OCI-LY7 (cell line): ENCODE measurements at regions of chr15 and their contacts with region 1.

Region 1: DNA sequence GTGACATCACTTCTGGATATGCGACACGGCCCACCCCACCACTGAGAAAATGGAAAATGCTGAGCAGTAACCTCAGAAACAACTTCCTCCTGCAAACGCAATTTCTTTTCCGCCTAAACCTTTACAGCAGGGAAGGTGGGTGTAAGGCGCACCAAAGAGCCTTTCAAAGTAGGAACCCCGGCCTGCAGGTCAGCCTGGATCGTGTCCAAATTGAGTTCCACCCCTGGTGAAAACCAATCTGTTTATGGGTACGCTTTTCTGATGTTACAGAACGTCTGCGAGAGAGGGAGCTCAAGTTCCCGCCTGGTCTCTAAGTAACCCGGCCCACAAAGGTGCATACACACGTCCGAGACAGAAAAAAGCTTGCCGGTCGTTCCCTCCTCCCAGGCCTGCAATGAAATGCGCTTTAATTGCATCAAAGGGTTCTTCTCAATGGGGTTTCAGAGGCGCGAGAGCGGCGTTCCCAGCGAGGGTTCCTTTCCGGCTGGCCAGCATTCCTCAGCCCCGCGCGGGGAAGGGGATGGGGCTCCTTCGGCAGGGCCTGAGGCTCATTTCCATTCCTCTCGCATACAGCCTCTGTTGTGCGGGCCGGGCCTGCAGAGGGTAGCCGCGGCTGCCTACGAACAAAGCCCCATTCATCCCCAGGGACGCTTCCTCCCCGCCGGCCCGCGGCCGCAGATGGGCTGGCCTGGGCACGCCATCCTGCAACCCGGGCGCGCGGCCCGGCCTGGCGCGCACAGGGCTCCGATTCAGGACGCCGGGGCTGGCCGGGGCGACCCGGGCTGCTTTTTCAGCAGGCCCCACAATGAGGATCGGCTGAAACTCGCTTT is 138.1 kb downstream of the TMCO5A start:
- DNase-seq: peak; percentile 92
- H3K4me3 ChIP-seq: peak overlapping the region; percentile 70
- H3K27ac ChIP-seq: peak overlapping the region; percentile 97
- H3K4me1 ChIP-seq: peaks cover 86% of the 10 kb centered on the region
- CTCF ChIP-seq: peak; percentile 71

Region 2: DNA sequence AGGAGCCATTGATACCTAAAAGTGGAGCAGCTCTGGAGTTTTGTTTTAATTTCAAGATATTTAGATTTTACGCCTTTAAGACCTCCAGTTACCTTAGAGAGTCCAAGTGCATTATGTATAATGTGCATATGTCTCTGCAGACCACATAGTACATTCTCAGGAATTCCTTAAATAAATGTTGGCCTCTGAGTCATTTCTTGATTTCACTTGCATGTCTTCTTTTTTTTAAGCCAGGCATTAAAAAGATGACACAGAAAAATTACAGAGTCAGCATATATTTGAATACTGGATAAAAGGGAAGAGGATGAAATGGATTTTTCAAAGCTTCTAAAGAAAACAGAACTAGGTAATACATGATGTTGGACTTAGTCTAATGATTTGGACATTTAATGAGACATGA is 12.9 kb before region 1 on chr15:
- CTCF ChIA-PET with region 1: interaction called, 5 read pairs
- POLR2A ChIA-PET with region 1: interaction called, 10 read pairs
- intact Hi-C with region 1: no loop called
- DNase-seq: no peak
- H3K4me3 ChIP-seq: no peak overlapping the region
- H3K27ac ChIP-seq: no peak overlapping the region
- H3K4me1 ChIP-seq: no peaks in the 10 kb centered on the region
- CTCF ChIP-seq: no peak

Region 3: DNA sequence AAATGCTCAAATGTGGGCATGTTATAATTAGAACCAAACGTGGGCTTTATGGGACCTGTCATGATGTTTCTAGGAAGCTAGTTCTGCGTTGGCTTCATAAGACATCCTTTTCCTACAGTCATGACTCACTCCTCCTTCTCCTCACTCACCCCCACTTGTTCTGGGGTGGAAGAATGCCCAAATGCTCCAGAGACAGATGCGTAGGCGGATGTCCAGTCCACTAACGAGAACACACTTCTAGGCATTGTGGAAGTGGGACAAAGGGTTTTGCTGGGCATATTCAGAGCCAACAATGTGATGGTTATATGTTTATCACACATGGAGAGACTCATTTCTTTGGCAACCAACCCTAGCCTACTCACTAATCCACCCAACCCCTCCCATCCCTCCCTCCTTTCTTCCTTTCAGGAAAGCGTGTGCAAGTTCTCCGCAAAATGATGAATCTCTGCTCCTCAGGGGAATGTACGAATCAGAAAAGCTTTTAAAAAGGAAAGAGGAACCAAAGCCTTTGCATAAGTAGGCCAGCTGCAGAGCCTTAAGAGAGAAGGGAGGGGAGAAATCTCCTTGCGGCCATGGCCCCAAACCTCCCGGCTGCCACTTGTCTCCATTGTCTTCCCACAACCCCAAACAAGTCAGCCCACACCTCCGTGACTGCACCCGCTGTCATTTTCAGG is 57.1 kb after region 1 on chr15:
- CTCF ChIA-PET with region 1: no interaction called
- POLR2A ChIA-PET with region 1: interaction called, 5 read pairs
- intact Hi-C with region 1: loop called (anchors 2 kb)
- DNase-seq: peak; percentile 66
- H3K4me3 ChIP-seq: peak overlapping the region; percentile 26
- H3K27ac ChIP-seq: peak overlapping the region; percentile 1
- H3K4me1 ChIP-seq: peaks cover 46% of the 10 kb centered on the region
- CTCF ChIP-seq: no peak

Region 4: GRCh38 chr15:38193496-38193895 is 120.9 kb after region 1 on chr15:
- CTCF ChIA-PET with region 1: interaction called, 5 read pairs
- POLR2A ChIA-PET with region 1: interaction called, 5 read pairs
- intact Hi-C with region 1: loop called (anchors 1 kb)
- DNase-seq: no peak
- H3K4me3 ChIP-seq: no peak overlapping the region
- H3K27ac ChIP-seq: peak overlapping the region; percentile 75
- H3K4me1 ChIP-seq: peaks cover 59% of the 10 kb centered on the region
- CTCF ChIP-seq: no peak

Region 5: DNA sequence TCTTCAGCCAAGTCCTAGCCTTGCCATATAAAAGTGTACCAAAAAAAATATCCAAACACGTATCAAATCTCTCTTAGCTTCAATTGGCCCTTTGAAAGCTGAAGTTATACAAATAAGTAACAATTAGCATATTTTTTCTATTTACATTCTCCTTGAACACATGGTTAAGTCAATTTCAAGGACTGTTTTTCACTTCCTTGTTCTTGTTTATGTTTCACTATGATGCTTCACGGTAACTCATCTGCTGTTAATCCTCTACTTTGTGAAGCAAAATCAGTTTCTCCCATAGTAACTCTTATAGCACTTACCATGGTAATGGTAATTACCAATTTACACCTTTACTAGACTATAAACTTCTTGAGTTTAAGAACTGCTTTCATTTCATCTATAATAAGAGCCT is 169.5 kb after region 1 on chr15:
- CTCF ChIA-PET with region 1: no interaction called
- POLR2A ChIA-PET with region 1: interaction called, 12 read pairs
- intact Hi-C with region 1: no loop called
- DNase-seq: peak; percentile 55
- H3K4me3 ChIP-seq: peak overlapping the region; percentile 47
- H3K27ac ChIP-seq: peak overlapping the region; percentile 9
- H3K4me1 ChIP-seq: peaks cover 46% of the 10 kb centered on the region
- CTCF ChIP-seq: no peak

Region 6: DNA sequence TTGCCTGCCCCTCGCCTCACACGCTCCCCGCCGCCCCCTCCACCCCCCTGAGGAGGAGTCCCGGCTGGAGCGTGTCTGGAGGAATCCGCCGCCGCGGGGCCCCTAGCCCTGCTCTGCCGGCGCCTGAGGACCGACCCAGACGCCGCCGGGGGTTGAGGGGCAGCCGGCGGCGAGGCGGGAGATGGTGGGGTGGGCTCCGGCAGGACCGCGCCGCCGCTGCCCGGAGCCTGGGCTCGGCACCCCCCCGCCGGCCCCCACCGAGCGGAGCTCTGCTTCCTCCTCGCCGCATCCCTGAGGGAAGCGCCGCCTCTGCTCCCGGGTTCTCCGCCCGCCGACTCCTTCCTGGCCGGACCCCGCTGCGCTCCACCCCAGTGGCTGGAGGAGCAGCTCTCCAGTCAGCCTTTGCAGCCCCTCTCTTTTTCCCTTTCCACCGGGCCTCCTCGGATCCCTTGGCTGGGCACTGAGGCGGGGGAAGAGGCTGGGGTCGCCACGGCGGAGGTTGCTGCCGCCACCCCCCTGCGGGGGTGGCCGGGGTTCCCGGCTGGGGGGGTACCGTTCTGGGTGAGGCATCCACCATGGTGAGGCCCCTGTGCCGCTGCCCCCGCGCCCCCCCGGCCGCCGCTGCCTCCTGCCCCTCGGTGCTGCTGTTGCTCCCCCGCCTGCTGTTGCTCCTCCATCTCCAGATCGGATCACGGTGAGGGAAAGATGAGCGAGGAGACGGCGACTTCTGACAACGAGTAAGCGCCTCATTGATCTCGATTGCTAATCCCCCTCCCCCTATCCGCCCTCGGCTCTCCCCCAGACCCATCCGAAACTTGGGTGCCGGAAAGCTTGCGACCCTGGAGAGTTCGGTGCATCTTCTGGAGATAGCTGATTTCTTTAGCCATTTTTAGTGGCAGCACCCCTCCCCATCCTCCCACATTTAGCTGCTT is 180.2 kb after region 1 on chr15 and contains the start of gene SPRED1:
- CTCF ChIA-PET with region 1: interaction called, 3 read pairs
- POLR2A ChIA-PET with region 1: interaction called, 16 read pairs
- intact Hi-C with region 1: loop called (anchors 1 kb)
- DNase-seq: peak; percentile 42
- H3K4me3 ChIP-seq: peak within 1 kb of the TSS; percentile 91
- H3K27ac ChIP-seq: peak within 1 kb of the TSS; percentile 76
- H3K4me1 ChIP-seq: peaks cover 28% of the 10 kb centered on the region
- CTCF ChIP-seq: no peak
- total RNA-seq, gene SPRED1: 7.5 and 9.6 TPM in 2 replicates

Region 7: DNA sequence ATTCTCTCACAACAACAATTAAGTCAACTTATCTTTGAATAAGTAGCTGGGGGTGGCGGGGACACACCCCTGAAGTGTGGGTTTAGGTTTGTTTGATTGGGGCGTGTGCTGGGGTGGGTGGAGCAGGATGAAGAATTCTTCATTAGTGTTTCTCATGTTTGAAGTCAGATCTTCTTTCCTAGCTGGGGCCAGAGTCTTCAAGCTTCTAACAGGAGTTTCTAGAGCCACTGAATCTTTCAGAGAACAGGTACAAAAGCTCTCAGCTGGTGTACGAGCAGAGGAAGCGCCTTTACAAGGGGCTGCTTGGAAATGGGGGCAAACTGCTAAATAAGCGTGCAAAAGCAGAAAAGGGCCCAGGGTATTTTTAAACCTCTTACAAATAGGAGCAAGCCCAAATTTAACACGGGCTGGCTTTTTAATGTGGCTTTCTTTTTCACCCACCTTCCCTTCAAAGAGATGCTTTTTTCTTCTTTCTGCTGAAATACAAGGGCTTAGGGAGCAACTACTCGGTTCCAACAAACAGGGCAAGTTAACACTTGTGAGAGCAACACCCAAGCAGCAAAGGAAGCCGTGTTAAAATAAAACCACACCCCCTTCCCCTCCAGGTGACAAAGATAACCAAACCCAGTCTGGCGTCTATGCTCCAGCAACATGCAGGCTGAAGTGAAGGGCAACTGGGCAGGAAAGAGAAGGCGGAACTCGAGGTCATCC is 578.9 kb after region 1 on chr15:
- CTCF ChIA-PET with region 1: no interaction called
- POLR2A ChIA-PET with region 1: no interaction called
- intact Hi-C with region 1: loop called (anchors 5 kb)
- DNase-seq: peak; percentile 88
- H3K4me3 ChIP-seq: peak overlapping the region; percentile 53
- H3K27ac ChIP-seq: peak overlapping the region; percentile 93
- H3K4me1 ChIP-seq: peaks cover 40% of the 10 kb centered on the region
- CTCF ChIP-seq: no peak